ENCODE measurements at regions of chr13 and their contacts with region 1.

Region 1: GRCh38 chr13:32315238-32316027 is at the starts of genes BRCA2 and ZAR1L:
- DNase-seq: peak; percentile 93
- H3K4me3 Mint-ChIP-seq: peak within 1 kb of the TSS; percentile 95
- H3K27ac Mint-ChIP-seq: peak within 1 kb of the TSS; percentile 99
- H3K4me1 Mint-ChIP-seq: peaks cover 13% of the 10 kb centered on the region
- H3K27me3 Mint-ChIP-seq: no peaks in the 10 kb centered on the region
- total RNA-seq, gene BRCA2: 22.1 to 23.1 TPM
- total RNA-seq, gene ZAR1L: not detected

Region 2: GRCh38 chr13:31859571-31859970 is 455.9 kb before region 1 on chr13:
- CTCF ChIA-PET with region 1: no interaction called
- POLR2A ChIA-PET with region 1: no interaction called
- intact Hi-C with region 1: no loop called
- DNase-seq: no peak
- H3K4me3 Mint-ChIP-seq: no peak overlapping the region
- H3K27ac Mint-ChIP-seq: no peak overlapping the region
- H3K4me1 Mint-ChIP-seq: no peaks in the 10 kb centered on the region
- H3K27me3 Mint-ChIP-seq: no peaks in the 10 kb centered on the region

Region 3: DNA sequence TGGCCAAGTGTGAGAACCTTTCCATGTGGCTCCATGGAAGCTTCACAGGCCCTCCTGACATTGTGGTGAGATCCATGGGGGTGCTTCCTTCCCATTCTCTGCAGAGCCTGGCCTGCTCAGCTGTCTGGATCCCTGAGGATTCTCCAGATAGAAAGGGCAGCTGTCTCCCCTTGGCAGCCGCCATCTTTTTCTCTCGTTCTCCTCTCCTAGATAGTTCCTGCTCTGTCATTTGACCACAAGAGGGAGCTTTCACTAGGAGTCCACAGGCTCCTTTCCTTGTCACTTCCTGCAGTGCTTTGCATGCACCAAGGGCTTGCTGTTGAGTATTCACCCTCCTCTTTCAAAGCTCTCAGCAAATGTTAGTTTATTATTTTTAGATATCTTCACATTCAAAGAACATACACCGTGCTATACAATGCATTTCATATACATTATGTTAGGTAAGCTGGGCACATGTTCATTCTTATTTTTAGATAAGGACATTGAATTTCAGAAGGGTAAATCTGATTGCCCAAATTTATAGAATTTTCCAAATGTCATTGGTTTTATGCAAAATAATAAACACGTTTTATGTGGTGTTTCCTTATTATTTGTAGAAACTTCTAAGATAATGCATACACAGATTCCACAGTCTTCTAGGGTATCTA is 150.7 kb before region 1 on chr13:
- CTCF ChIA-PET with region 1: interaction called, 5 read pairs
- POLR2A ChIA-PET with region 1: no interaction called
- intact Hi-C with region 1: loop called (anchors 2 kb)
- DNase-seq: peak; percentile 17
- H3K4me3 Mint-ChIP-seq: no peak overlapping the region
- H3K27ac Mint-ChIP-seq: no peak overlapping the region
- H3K4me1 Mint-ChIP-seq: no peaks in the 10 kb centered on the region
- H3K27me3 Mint-ChIP-seq: no peaks in the 10 kb centered on the region

Region 4: GRCh38 chr13:32267836-32268439 is 47.5 kb before region 1 on chr13:
- CTCF ChIA-PET with region 1: interaction called, 13 read pairs
- POLR2A ChIA-PET with region 1: interaction called, 4 read pairs
- intact Hi-C with region 1: loop called (anchors 1 kb)
- DNase-seq: peak; percentile 69
- H3K4me3 Mint-ChIP-seq: no peak overlapping the region
- H3K27ac Mint-ChIP-seq: no peak overlapping the region
- H3K4me1 Mint-ChIP-seq: peaks cover 6% of the 10 kb centered on the region
- H3K27me3 Mint-ChIP-seq: no peaks in the 10 kb centered on the region

Region 5: GRCh38 chr13:32409561-32410421 is 94.4 kb after region 1 on chr13:
- CTCF ChIA-PET with region 1: no interaction called
- POLR2A ChIA-PET with region 1: interaction called, 5 read pairs
- intact Hi-C with region 1: loop called (anchors 5 kb)
- DNase-seq: no peak
- H3K4me3 Mint-ChIP-seq: no peak overlapping the region
- H3K27ac Mint-ChIP-seq: no peak overlapping the region
- H3K4me1 Mint-ChIP-seq: peaks cover 23% of the 10 kb centered on the region
- H3K27me3 Mint-ChIP-seq: no peaks in the 10 kb centered on the region

Region 6: GRCh38 chr13:32639502-32640105 is 324.2 kb after region 1 on chr13:
- CTCF ChIA-PET with region 1: no interaction called
- POLR2A ChIA-PET with region 1: no interaction called
- intact Hi-C with region 1: loop called (anchors 10 kb)
- DNase-seq: peak; percentile 56
- H3K4me3 Mint-ChIP-seq: no peak overlapping the region
- H3K27ac Mint-ChIP-seq: no peak overlapping the region
- H3K4me1 Mint-ChIP-seq: peaks cover 41% of the 10 kb centered on the region
- H3K27me3 Mint-ChIP-seq: no peaks in the 10 kb centered on the region